Activated CD4-positive, alpha-beta memory T cell treated with anti-CD3 and anti-CD28 coated beads for 36 hours (primary cell): ENCODE measurements at regions of chr3 and their contacts with region 1.

Region 1: GRCh38 chr3:148943506-148944205 is 47.7 kb upstream of the GYG1 start:
- DNase-seq: no peak
- H3K4me3 Mint-ChIP-seq: no peak overlapping the region
- H3K27ac Mint-ChIP-seq: no peak overlapping the region
- H3K4me1 Mint-ChIP-seq: no peaks in the 10 kb centered on the region
- H3K27me3 Mint-ChIP-seq: peaks cover 1% of the 10 kb centered on the region

Region 2: GRCh38 chr3:148309390-148310035 is 634.1 kb before region 1 on chr3:
- CTCF ChIA-PET with region 1: no interaction called
- POLR2A ChIA-PET with region 1: no interaction called
- intact Hi-C with region 1: loop called (anchors 5 kb)
- DNase-seq: peak; percentile 10
- H3K4me3 Mint-ChIP-seq: no peak overlapping the region
- H3K27ac Mint-ChIP-seq: no peak overlapping the region
- H3K4me1 Mint-ChIP-seq: no peaks in the 10 kb centered on the region
- H3K27me3 Mint-ChIP-seq: no peaks in the 10 kb centered on the region

Region 3: GRCh38 chr3:148379763-148380382 is 563.8 kb before region 1 on chr3:
- CTCF ChIA-PET with region 1: no interaction called
- POLR2A ChIA-PET with region 1: no interaction called
- intact Hi-C with region 1: loop called (anchors 10 kb)
- DNase-seq: no peak
- H3K4me3 Mint-ChIP-seq: no peak overlapping the region
- H3K27ac Mint-ChIP-seq: no peak overlapping the region
- H3K4me1 Mint-ChIP-seq: no peaks in the 10 kb centered on the region
- H3K27me3 Mint-ChIP-seq: no peaks in the 10 kb centered on the region

Region 4: DNA sequence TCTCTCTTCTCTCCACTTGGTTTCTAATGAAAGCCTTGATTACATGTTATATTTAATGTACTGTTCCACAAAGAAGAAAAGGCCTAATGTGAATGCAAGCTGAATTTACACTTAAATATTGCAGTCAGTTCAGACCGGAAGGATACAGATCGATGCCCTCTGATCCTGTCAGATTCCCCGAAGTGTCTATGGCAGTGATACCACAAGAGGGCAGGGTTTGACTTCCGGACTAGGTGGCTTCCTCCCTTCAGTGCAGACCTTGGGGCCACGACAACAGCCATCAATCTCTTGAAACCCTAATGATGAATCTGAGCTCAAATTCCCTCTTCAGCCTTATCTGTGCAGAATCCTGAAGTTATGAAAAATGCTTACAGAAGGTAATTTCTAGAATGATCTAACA is 216.4 kb before region 1 on chr3:
- CTCF ChIA-PET with region 1: no interaction called
- POLR2A ChIA-PET with region 1: no interaction called
- intact Hi-C with region 1: loop called (anchors 2 kb)
- DNase-seq: peak; percentile 10
- H3K4me3 Mint-ChIP-seq: no peak overlapping the region
- H3K27ac Mint-ChIP-seq: no peak overlapping the region
- H3K4me1 Mint-ChIP-seq: no peaks in the 10 kb centered on the region
- H3K27me3 Mint-ChIP-seq: no peaks in the 10 kb centered on the region

Region 5: GRCh38 chr3:148861277-148861869 is 82.3 kb before region 1 on chr3:
- CTCF ChIA-PET with region 1: interaction called, 96 read pairs
- POLR2A ChIA-PET with region 1: no interaction called
- intact Hi-C with region 1: loop called (anchors 1 kb)
- DNase-seq: no peak
- H3K4me3 Mint-ChIP-seq: no peak overlapping the region
- H3K27ac Mint-ChIP-seq: no peak overlapping the region
- H3K4me1 Mint-ChIP-seq: no peaks in the 10 kb centered on the region
- H3K27me3 Mint-ChIP-seq: peaks cover 15% of the 10 kb centered on the region